ENCODE measurements at regions of chr3 and their contacts with region 1.

Region 1: DNA sequence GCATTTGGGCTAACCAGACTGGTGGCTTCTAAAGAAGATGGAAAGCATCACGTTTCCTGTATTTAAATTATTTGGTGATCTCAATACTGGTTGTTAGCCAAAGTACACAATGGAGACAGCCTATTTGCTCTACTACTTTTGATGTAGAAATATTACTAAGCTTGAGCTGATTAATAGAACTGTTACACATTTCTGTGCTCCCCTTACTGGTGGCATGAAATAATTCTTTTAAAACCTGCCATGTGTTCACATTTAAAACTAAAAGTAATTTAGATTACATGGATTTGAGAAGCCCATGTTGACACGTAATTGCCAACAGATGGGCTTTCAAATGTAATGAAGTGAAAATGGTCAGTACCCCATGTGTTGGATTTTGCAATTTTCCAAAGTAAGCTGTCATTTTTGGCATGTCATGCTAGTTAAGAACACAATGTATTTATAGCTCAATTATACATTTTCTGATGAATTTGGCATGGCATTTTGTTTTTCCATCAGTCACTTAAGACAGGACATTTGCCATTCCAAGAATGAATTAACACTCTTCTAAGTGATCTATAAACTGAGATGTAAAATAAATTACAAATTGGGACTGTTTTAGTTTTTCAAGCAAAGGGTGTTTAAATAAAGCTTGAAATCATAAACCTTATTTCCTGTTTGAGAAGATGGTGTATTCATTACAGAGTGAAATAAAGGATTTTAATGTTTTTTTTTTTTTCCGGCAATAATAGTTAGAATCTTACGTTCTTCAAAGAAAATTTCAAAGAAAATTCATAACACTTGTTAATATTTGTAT is 10.8 kb upstream of the RARRES1 start:
- DNase-seq: no peak
- ATAC-seq: no peak
- H3K4me3 ChIP-seq: no peak overlapping the region
- H3K4me3 Mint-ChIP-seq: no peak overlapping the region
- H3K27ac ChIP-seq: no peak overlapping the region
- H3K27ac Mint-ChIP-seq: no peak overlapping the region
- H3K4me1 ChIP-seq: peaks cover 6% of the 10 kb centered on the region
- H3K4me1 Mint-ChIP-seq: peaks cover 11% of the 10 kb centered on the region
- H3K27me3 ChIP-seq: no peaks in the 10 kb centered on the region
- H3K27me3 Mint-ChIP-seq: no peaks in the 10 kb centered on the region
- CTCF ChIP-seq: no peak

Region 2: DNA sequence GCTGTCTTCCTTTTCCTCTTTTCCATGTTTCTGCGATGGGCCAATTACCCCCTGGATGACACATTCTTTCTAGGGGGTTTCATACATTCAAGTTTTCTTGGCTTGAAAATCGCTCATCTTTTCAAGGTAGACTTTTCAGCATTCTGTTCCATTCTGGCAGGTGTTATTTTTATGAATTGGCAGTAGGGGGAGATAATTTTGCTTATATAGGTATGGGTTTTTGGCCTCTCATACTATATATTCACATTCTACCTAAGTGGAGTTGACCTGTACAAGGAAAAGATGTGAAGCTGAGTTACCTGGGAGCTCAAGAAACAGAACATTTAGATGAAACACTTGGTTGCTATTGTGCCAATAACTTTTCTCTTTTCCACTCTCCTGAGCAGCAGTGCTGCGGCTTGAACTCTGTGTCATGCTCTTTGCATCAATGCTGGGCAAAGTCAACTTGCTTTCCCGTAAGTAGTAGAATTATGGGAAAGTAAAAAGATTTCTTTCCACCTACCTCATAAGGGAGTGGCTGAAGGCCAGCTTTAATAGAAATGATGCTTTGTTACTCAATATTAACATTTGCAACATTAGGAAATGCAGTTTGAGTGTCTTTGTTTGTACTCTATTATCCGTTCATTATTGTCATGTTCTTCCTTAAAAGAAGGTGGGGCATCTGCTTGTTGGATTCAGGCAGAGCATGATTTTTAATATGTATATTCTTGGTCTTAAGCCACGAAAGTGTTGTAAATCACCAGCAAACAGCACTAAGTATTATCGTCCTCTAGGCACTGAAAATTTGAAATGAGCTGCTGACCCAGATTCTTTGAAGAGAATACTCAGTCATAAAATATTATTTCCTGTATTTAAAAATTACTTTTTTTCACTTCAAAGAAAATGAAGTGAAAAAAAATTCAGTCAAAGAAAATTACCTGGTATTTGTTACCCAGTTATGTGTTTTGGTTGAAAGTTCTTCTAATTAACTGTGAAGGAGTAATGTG is 31.1 kb after region 1 on chr3:
- CTCF ChIA-PET with region 1: no interaction called
- POLR2A ChIA-PET with region 1: no interaction called
- intact Hi-C with region 1: loop called in 1 of 2 experiments (anchors 2 kb)
- DNase-seq: no peak
- ATAC-seq: no peak
- H3K4me3 ChIP-seq: no peak overlapping the region
- H3K4me3 Mint-ChIP-seq: no peak overlapping the region
- H3K27ac ChIP-seq: no peak overlapping the region
- H3K27ac Mint-ChIP-seq: no peak overlapping the region
- H3K4me1 ChIP-seq: no peaks in the 10 kb centered on the region
- H3K4me1 Mint-ChIP-seq: no peaks in the 10 kb centered on the region
- H3K27me3 ChIP-seq: no peaks in the 10 kb centered on the region
- H3K27me3 Mint-ChIP-seq: no peaks in the 10 kb centered on the region
- CTCF ChIP-seq: no peak